ENCODE measurements at regions of chr22 and their contacts with region 1.

Region 1: DNA sequence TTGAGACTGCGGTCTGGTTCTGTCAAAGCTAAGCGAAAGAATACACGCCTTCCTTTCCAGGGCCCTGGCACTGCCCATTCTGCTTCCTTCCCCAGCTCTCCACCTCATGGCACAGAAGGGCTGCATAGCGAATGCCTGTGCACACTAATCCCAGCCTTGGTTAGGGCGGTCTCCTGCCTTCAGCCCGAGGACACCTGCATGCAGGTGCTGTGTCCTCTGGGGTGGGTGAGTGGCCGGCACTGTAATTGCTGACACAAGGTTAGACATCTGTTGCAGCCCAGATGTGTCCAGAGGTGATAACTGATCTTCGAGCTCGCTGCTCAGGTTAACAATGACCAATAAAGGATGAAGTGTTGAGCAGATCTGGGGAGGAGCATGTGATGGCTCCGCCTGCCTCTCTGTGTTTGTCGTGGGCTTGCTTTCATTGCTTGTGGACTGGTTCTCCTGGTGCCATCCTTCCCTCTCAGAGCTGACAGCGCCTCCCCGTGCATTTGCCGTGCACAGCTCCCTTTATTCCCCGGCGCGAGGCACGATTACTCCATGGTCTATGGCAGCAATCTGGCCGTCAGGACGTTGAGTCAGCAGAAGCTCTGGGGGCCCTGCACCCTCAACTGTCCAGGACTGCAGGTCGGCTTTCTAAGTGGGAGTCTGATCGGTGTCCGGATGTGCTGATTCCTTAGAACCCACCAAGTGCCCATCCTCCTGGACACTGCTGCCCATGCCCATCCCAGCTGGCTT is 1088.2 kb downstream of the BRD1 start:
- DNase-seq: no peak
- H3K4me3 ChIP-seq: no peak overlapping the region
- H3K27ac ChIP-seq: no peak overlapping the region
- H3K4me1 ChIP-seq: no peaks in the 10 kb centered on the region
- H3K27me3 ChIP-seq: no peaks in the 10 kb centered on the region
- CTCF ChIP-seq: no peak

Region 2: DNA sequence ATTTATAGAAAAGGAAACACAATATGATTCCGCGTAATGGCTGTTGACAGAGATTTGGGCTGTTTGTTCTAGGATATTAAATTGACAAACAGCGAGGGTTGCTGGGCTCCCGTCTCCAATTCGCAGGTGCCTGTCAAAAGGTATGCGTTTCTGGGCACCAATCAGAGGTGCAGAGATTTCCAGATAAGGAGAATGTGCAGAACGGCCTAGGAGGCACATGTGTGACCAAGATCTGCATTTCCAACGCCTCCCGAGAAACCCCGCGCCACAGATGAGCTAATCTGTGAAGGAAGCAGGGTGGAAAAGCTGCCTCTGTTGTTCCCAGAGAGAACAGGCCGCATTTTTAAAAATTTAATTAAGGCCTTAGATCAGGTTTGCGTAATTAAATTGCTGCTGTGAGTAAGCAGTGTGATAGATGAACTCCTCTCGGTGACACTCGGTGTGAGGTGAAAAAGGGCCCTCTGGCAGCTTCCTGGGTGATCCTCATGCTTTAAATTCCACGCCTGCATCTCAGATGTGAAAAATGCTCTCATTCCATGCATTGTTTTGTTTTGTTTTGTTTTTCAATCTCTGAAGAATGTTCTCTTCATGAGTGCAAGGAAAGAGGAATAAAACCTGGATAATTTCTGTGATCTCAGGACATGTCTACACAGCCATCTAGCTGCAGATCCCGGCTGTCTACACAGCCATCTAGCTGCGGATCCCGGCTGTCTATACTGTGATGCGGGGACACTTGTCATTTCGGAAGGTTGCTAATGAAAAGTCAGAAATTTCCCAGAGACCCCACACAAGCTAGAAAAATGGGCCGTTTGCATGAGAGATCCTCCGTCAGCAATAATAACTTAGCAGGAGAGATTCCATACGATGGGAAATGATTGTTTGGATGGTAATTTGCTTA is 310.8 kb before region 1 on chr22:
- intact Hi-C with region 1: no loop called
- DNase-seq: no peak
- H3K4me3 ChIP-seq: no peak overlapping the region
- H3K27ac ChIP-seq: no peak overlapping the region
- H3K4me1 ChIP-seq: no peaks in the 10 kb centered on the region
- H3K27me3 ChIP-seq: no peaks in the 10 kb centered on the region
- CTCF ChIP-seq: no peak

Region 3: GRCh38 chr22:48796310-48797015 is 56.9 kb after region 1 on chr22:
- intact Hi-C with region 1: loop called (anchors 10 kb)
- DNase-seq: no peak
- H3K4me3 ChIP-seq: no peak overlapping the region
- H3K27ac ChIP-seq: no peak overlapping the region
- H3K4me1 ChIP-seq: no peaks in the 10 kb centered on the region
- H3K27me3 ChIP-seq: no peaks in the 10 kb centered on the region
- CTCF ChIP-seq: no peak

Measured in colonic mucosa (tissue), 4 donors.